ENCODE measurements at regions of chr21 and their contacts with region 1.

Region 1: GRCh38 chr21:30283404-30283803 is 654 bp upstream of the KRTAP24-1 start:
- DNase-seq: no peak
- ATAC-seq: no peak
- H3K4me3 ChIP-seq: no peak overlapping the region
- H3K27ac ChIP-seq: no peak overlapping the region
- H3K4me1 ChIP-seq: no peaks in the 10 kb centered on the region
- H3K27me3 ChIP-seq: no peaks in the 10 kb centered on the region
- CTCF ChIP-seq: no peak

Region 2: DNA sequence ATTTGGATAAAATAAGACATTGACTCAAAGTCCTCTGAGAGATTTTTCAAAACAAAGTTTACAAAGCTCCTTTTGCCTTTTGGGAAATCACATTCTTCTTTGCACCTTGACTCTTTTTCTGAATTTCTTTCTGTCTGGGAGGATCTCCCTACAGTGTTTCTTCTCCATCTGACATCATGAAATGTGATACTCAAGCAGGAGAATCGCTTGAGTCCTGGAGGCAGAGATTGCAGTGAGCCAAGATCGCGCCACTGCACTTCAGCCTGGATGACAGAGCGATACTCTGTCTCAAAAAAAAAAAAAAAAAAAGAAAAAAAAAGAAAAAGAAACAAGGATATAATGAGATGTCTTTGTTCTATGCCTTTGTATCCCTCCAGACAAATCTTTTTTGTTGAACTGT is 330.3 kb before region 1 on chr21:
- CTCF ChIA-PET with region 1: interaction called, 12 read pairs
- POLR2A ChIA-PET with region 1: no interaction called
- in situ Hi-C with region 1: no loop called
- intact Hi-C with region 1: no loop called
- DNase-seq: no peak
- ATAC-seq: no peak
- H3K4me3 ChIP-seq: no peak overlapping the region
- H3K27ac ChIP-seq: no peak overlapping the region
- H3K4me1 ChIP-seq: no peaks in the 10 kb centered on the region
- H3K27me3 ChIP-seq: no peaks in the 10 kb centered on the region
- CTCF ChIP-seq: no peak

Region 3: DNA sequence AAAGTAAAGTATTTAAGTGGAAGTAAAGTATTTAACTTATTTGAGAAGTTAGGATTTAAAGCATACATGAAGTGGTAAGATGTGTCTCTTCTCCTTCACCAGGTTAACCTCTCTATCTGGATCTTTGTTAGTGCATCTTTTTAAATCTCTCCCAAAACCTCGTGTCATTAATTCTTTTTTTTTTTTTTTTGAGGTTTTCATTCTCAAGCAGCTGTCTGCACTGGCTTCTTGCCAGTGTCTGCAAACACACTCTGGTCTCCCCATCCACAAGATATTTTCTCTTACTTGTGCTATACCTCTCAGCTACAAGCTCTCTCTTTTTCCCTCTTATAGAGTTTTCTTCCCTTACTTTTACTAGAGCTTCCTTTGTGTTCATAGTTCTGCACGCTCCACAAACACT is 165.8 kb before region 1 on chr21:
- CTCF ChIA-PET with region 1: no interaction called
- POLR2A ChIA-PET with region 1: no interaction called
- in situ Hi-C with region 1: no loop called
- intact Hi-C with region 1: no loop called
- DNase-seq: no peak
- ATAC-seq: no peak
- H3K4me3 ChIP-seq: no peak overlapping the region
- H3K27ac ChIP-seq: no peak overlapping the region
- H3K4me1 ChIP-seq: no peaks in the 10 kb centered on the region
- H3K27me3 ChIP-seq: no peaks in the 10 kb centered on the region
- CTCF ChIP-seq: no peak

Region 4: DNA sequence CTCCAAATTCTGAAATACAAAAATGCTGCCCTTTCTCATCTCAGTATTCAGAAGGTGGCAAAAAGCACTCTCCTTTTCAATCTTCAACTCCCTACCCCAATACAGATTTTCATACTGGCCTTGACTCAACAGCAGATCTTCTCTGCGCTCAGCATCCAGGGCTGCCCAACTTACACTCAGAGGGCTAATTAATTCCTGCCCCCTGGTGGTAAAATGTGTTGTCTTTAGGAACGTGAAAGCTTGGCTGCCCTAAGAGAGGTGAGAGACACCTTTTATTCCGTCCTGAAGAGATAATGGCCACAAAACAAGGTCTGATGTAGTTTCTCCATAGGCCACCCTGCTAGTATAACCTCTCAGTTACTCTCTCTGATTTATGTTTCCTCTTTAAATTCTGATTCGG is 25.6 kb before region 1 on chr21:
- CTCF ChIA-PET with region 1: no interaction called
- POLR2A ChIA-PET with region 1: no interaction called
- in situ Hi-C with region 1: no loop called
- intact Hi-C with region 1: no loop called
- DNase-seq: no peak
- ATAC-seq: no peak
- H3K4me3 ChIP-seq: no peak overlapping the region
- H3K27ac ChIP-seq: no peak overlapping the region
- H3K4me1 ChIP-seq: no peaks in the 10 kb centered on the region
- H3K27me3 ChIP-seq: no peaks in the 10 kb centered on the region
- CTCF ChIP-seq: peak; percentile 21